Aorta (tissue), 5 donors: ENCODE measurements at regions of chr19 and their contacts with region 1.

Region 1: DNA sequence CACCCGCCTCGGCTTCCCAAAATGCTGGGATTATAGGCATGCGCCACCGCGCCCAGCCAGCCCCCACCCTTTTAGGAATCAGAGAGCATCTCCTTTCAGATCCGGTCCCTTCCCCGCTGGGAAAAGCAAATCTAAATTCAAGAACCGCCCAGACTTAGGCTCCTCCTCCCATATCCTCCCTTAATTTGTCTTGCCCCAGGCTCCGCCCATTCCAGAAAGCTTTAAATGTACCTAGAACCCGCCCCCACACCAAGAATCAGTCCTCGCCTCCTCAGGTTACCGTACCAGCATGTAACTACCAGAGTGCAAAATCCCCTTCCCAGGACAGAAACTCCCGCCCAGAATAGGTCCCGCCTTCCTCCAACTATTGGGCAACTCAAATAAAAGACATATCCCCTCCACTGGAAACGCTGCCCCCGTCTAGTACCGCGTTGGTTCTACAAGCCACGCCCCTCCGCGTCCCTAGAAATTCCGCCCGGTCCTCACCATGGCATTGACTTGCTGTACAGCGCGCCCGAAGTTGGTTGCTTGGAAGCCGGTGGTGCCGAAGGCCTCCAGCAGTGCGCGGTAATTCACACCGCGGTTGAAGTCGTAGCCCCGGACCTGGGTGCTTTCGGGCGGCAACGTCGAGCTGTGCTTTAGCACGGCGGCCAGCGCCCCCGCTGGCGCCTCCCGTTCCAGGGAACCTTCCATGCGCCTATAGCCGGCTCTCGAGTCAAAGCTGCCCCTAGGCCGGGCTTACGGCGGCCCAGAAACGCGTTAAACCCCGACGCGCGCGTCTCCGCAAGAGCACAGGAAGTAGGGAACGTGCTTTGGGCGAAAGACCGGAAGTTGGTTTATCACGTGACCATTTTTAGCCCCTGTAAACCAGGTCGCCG is at the start of gene DHPS:
- DNase-seq: peak; percentile 94 to 95
- ATAC-seq: peak; percentile 96
- H3K4me3 ChIP-seq: peak within 1 kb of the TSS; percentile 83 to 96
- H3K27ac ChIP-seq: peak within 1 kb of the TSS; percentile 53 to 84
- H3K4me1 ChIP-seq: no peaks in the 10 kb centered on the region
- H3K27me3 ChIP-seq: no peaks in the 10 kb centered on the region
- total RNA-seq, gene DHPS: 50.1 to 74.0 TPM

Region 2: DNA sequence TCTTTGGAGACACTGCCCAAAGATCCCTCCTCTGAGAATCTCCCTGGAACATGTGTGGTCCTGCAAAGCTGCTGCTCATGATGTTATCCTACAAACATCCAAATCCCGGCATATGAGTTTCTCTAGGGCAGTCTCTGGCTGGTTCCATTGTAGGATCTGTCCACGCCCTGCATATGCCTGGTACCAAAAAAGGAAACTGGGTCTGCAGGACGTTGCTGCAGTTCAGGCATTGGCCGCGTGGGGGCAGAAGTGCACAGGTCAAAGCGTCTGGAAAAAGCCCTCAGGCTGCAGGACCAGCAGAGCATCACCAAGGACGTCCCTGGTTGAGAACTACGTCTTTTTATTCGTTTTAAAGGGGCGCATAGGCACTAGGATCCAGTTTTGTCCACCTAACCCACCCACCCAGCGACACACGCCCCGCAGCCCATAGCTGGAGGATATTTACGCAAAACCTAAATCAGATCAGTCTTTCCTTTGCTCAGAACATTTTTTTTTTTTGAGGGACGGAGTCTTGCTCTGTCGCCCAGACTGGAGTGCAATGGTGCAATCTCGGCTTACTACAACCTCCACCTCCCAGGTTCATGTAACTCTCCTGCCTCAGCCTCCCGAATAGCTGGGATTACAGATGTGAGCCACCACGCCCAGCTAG is 117.2 kb before region 1 on chr19:
- intact Hi-C with region 1: loop called in 1 of 2 experiments (anchors 5 kb)
- DNase-seq: peak; percentile 93 to 98
- ATAC-seq: peak; percentile 93
- H3K4me3 ChIP-seq: no peak overlapping the region
- H3K27ac ChIP-seq: no peak overlapping the region
- H3K4me1 ChIP-seq: no peaks in the 10 kb centered on the region
- H3K27me3 ChIP-seq: no peaks in the 10 kb centered on the region

Region 3: DNA sequence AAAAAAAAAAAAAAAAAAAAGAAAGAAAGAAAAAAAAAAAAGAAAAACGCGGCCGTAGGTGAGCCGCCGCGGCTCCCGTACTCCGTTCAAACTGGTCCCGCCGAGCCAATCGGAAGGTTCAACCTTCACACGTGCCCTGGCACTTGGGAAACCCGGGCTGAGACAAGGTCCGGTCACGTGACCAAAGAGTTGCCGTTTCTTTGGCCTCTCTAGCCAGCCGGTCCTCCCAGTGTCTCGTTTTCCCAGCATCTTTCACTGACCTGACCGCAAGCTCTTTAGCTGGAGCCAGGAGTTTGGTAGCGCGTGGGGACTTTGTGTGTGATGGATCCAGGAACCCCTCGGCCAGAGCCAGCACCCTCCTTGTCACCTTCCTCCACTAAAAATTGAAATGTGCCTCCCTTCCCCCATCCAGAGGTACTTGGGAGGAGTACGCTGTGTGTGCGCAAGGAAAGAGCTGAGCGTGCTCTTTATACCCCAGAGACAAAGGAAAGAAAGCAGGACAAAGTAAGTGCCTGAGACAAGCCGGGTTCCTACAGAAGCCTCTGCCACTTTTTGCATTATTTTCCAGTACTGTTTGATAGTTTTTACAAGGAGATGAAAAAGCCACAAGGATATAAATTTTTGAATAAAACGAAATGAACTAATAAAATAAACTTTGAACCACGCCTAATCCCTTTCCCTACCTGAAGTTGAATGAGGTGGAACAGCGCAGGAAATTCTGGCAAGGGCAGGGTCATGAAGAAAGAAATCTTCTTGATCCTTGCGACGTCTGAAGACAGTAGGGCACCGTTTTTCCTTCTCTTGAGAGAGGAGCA is 41.5 kb after region 1 on chr19:
- intact Hi-C with region 1: loop called in 1 of 2 experiments (anchors 2 kb)
- DNase-seq: peak; percentile 98
- ATAC-seq: peak; percentile 96
- H3K4me3 ChIP-seq: peak overlapping the region; percentile 68 to 97
- H3K27ac ChIP-seq: peak overlapping the region; percentile 59 to 70
- H3K4me1 ChIP-seq: no peaks in the 10 kb centered on the region
- H3K27me3 ChIP-seq: no peaks in the 10 kb centered on the region

Region 4: DNA sequence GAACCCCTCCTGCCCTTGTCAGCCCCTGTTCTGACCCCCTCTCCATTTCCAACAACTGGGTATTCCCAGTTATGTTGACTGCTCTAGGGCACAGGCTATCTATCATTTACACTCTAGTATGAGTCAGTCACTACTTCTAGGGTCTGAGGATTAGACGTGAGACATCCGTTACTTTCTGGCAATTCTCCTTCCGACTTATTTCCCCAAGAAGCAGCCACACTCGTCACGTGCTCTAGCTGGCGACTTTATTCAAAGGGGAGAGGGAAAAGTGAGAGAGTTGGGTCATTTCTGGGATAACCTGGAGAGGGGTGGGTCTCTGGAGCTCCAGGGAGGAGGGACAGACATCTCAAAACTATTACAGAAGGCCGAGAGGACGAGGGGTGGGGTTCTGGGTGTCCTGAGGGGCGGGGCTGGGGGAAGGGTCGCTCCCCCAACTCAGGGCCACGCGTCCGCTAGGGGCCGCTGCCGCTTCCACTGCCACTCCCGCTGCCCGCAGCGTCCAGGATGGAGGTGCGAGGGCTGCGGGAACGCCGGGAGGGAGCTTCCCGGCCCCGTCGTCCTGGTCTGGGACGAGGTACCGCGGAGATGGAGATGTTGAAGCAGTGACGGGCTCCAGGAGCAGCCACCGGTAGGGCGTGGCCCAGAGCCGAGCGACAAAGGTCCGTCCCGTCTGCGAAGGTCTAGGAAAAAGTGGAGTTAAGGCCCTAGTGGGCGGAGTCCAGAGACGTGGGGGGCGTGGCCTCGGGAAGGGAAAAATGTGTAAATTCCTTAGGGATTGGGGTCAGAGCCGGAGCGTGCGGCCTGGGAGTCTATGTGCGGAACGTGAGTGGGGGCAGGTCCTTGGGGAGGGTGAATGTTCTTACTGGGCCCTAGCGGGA is 144.2 kb after region 1 on chr19:
- intact Hi-C with region 1: no loop called
- DNase-seq: no peak
- ATAC-seq: no peak
- H3K4me3 ChIP-seq: no peak overlapping the region
- H3K27ac ChIP-seq: no peak overlapping the region
- H3K4me1 ChIP-seq: no peaks in the 10 kb centered on the region
- H3K27me3 ChIP-seq: no peaks in the 10 kb centered on the region